Head of caudate nucleus (tissue), 42 donors: ENCODE measurements at regions of chr10 and their contacts with region 1.

Region 1: DNA sequence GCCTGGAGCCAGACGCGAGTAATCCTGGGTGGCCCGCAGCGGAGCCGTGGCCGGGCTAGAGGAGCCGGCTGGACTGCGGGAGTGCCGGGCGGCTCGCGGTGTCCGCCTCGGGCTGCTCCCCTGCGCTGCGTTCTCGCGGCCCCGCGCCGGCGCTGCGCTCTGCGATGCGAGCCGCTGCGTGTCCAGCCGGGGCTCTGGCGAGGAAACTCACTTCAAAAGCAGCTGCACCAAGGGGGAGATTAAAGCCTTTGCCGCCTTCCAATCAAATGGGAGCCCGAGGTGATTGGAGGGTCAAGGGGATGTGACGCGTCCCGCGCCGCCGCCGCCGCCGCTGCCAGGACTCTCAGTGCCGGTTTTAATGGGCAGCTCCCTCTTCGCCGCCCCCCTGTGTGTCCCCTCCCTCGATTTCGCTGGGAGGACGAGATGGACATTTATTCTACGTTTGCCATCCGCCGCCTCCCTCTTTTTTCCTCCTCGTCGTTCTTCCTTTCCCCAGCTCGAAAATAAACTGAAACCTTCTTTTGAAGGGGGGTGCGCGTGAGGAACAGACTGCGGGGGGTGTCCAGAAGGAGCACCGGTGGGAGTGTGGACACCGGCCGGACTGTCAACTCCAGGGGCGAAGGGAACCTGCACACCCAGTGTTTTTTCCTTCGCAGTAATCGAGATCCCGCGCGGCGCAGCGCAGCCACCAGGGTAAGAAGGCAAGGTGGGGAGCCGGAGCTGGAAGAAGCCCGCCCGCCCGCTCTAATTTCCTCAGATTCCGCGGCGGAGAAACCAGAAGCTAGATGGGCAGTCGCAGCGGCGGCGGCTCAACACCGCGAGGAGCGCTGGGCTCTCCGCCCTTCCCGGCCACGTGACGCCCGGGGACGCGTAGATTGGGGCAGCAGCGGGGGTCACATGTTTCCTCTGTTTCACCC is at the start of gene ZNF503:
- DNase-seq: peak; percentile 91 to 99 (median 96)

Region 2: GRCh38 chr10:75180592-75180991 is 221.2 kb before region 1 on chr10:
- intact Hi-C with region 1: no loop called
- DNase-seq: no peak

Region 3: DNA sequence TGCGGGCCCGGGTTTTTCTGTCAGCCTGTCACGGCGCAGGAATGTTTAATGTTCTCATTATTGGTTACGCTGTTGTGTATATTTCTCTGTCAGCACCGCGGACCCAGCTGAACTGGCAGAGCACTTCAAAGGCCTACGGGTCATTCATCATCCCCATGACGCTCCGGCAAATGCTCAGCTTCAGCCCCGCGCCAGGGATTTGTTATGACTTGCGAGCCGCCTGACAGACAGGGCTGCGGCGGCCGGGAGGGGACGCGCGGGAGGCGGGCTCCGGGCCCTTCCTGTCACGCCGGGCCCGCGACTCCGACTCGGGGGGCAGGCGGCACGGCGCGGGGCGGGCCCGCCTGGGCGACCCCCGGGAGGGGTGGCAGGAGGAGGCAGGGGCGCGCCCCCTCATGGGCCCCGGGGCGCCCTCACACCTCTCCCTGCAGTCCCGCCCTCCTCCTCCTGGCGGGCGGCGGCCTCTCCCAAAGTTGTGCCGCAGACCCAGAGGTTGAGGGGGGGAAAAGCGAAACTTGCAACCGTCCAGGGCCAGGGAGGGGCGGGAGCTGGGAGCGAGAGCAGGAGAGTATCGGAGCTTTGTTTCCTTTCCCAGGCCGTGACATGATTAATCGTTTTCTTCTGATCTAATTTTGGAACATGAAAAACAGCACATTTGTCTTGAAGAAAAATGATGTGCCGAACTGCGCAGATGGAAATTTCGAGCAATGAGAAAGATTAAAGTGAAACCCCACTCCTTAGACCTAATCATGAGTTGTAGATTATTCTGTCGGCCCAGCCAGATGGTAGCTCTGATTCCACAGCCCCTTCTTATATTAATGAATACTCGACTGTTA is 106.7 kb before region 1 on chr10:
- intact Hi-C with region 1: loop called (anchors 10 kb)
- DNase-seq: peak; percentile 33 to 84 (median 62)

Region 4: DNA sequence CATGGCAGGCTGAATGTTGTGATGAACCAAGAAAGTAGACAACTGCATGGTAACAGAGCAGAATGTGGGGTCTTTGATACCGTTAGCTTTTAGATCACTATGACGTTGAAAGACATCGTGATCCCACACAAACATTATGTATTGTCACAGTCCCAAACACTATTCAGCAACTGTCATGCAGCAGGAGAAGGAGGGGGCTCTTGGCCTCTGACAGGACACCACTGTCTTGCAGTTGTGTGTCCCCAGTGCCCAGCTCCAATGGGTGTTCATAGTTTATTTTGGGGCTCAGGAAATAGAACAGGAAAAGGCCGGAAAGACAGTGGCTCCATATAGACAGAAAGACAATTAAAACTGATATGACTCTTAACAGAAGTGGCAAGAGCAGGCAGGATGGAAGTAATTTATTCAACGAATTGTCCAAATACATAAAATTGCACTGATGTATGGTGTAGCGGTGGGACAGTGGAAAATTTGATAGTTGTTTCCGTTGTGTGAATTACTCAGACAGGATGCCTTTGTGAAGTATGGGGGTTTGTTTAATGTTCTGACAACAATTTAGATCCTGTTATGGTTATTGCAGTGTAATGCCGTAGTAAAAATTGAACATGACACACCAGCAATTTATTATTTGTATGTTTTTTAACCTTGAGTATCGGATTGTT is 321.6 kb after region 1 on chr10:
- intact Hi-C with region 1: no loop called
- DNase-seq: no peak

Region 5: GRCh38 chr10:75910032-75910431 is 508.2 kb after region 1 on chr10:
- intact Hi-C with region 1: loop called (anchors 10 kb)
- DNase-seq: peak in 1 of 42 donors; percentile 43

Region 6: DNA sequence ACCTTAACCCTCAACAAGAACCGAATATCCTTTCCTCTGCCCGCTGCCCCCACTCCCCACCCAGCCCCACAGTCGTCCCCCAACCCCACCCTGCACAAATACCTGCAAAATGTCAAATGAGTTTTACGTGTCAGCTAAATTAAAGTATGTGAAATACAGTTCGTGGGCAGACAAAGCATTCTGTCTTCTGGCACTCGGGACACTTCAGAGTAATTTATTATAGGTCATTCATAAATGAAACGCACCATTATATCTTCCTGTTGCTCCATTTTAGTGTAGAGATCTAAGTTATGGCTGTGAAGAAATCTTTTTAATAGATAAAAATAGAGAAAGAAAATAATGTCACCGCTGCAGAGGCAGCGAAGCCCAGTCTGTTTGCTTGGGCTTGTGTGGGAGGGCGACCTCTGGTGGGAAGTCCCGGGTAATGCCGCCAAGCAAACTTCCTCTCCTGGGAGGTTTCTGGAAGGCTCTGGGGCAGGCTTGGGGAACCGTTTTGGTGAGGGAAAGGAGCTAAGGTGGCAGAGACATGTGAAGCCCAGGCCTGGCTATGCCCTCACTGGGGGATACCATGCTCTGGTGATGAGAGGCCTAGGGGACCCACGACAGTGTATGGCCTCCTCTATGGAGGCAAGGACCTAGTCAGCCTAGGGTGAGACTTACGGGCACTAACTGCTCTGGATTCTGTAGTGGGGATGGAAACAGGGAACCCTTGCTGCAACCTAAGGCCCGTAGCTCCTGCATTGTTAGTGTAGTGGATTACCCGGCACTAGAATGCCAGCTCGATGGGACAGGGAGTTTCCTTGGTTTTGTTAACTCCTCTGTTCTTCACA is 634.5 kb after region 1 on chr10:
- intact Hi-C with region 1: loop called (anchors 10 kb)
- DNase-seq: peak; percentile 54 to 91 (median 82)

Region 7: GRCh38 chr10:76303682-76304316 is 902.0 kb after region 1 on chr10:
- intact Hi-C with region 1: loop called (anchors 10 kb)
- DNase-seq: peak; percentile 28 to 92 (median 73)